ENCODE measurements at regions of chr3 and their contacts with region 1.

Region 1: GRCh38 chr3:181738551-181738950 is 26.8 kb downstream of the SOX2 start:
- DNase-seq: no peak
- H3K4me3 ChIP-seq: no peak overlapping the region
- H3K27ac ChIP-seq: no peak overlapping the region
- H3K4me1 ChIP-seq: peaks cover 3% of the 10 kb centered on the region
- CTCF ChIP-seq: no peak

Region 2: DNA sequence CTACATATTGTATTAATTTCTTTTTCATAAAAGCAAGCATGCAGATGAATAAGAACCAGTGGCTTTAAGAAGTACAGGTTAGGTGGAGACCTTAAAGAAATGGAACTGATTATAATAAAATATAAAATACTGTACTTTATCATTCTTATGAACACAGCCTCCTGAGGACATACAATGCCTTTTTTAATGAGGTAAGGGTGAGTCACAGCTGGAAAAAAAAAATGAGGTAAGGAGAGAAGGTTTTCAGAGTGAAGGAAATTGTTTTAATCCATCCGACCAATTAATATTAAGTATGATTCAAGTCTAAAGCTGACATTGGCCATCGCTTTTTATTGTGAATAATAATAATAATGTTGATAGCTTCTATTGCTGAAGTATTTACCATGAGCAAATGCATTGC is 197.1 kb before region 1 on chr3:
- CTCF ChIA-PET with region 1: no interaction called
- POLR2A ChIA-PET with region 1: no interaction called
- intact Hi-C with region 1: no loop called
- DNase-seq: no peak
- H3K4me3 ChIP-seq: no peak overlapping the region
- H3K27ac ChIP-seq: no peak overlapping the region
- H3K4me1 ChIP-seq: no peaks in the 10 kb centered on the region
- CTCF ChIP-seq: no peak

Region 3: DNA sequence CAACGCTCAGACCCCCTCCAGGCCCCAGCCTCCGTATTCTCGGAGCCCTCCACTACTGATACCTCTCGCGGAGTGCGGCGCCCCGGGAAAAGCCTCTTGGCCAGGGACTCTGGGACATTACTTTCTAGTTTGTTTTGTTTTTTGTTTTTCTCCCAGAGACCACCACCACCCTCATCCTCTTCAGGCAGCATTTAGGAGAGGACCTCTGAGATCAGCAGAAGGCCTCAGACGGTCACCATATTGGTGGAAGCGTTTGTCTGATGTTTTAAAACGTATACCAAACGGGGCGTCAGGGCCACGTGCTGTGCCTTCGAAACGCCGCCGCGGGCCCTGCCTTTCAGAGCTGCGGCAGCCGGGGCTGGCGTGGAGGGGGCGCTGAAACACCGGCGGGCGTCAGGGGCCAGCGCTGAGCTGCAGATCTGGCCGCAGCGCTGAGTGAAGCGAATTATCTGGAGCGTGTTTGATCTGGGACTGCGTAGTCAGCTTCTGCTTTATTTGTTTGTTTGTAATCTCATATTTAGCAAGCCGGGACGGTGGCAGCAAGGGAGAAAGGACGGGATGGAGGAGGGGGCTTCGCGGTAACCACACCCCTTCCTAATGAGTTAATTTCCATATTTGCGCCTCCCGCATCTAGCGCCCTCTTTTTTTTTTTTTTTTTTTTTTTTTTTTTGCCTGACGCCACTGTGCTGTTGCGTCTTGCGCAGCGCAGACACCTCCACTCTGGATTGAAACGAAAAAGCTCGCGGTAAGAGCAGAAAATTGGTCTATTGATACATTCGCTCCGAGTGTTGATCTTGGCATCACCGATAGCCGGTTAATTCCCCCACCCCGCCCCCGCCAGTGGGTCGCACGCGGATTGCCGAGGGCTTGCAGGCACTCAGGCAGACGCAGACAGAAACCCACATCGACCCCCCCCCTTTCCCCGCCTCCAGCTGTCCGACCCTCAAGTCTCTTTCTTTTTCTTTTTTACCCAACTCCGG is 11.9 kb before region 1 on chr3:
- CTCF ChIA-PET with region 1: interaction called, 3 read pairs
- POLR2A ChIA-PET with region 1: interaction called, 10 read pairs
- intact Hi-C with region 1: no loop called
- DNase-seq: no peak
- H3K4me3 ChIP-seq: peak overlapping the region; percentile 65
- H3K27ac ChIP-seq: no peak overlapping the region
- H3K4me1 ChIP-seq: peaks cover 54% of the 10 kb centered on the region
- CTCF ChIP-seq: no peak